Activated CD4-positive, alpha-beta memory T cell treated with anti-CD3 and anti-CD28 coated beads, Interleukin-2, amount 10 ng/mL, durations not matched to agents 7 days and 5 days (primary cell): ENCODE measurements at regions of chr10 and their contacts with region 1.

Region 1: GRCh38 chr10:95246579-95247051 is 44.2 kb downstream of the PDLIM1 start:
- DNase-seq: peak; percentile 68
- H3K4me3 Mint-ChIP-seq: no peak overlapping the region
- H3K27ac Mint-ChIP-seq: no peak overlapping the region
- H3K4me1 Mint-ChIP-seq: peaks cover 38% of the 10 kb centered on the region
- H3K27me3 Mint-ChIP-seq: peaks cover 4% of the 10 kb centered on the region

Region 2: GRCh38 chr10:95056744-95057363 is 189.8 kb before region 1 on chr10:
- CTCF ChIA-PET with region 1: no interaction called
- POLR2A ChIA-PET with region 1: no interaction called
- DNase-seq: no peak
- H3K4me3 Mint-ChIP-seq: no peak overlapping the region
- H3K27ac Mint-ChIP-seq: no peak overlapping the region
- H3K4me1 Mint-ChIP-seq: no peaks in the 10 kb centered on the region
- H3K27me3 Mint-ChIP-seq: no peaks in the 10 kb centered on the region

Region 3: DNA sequence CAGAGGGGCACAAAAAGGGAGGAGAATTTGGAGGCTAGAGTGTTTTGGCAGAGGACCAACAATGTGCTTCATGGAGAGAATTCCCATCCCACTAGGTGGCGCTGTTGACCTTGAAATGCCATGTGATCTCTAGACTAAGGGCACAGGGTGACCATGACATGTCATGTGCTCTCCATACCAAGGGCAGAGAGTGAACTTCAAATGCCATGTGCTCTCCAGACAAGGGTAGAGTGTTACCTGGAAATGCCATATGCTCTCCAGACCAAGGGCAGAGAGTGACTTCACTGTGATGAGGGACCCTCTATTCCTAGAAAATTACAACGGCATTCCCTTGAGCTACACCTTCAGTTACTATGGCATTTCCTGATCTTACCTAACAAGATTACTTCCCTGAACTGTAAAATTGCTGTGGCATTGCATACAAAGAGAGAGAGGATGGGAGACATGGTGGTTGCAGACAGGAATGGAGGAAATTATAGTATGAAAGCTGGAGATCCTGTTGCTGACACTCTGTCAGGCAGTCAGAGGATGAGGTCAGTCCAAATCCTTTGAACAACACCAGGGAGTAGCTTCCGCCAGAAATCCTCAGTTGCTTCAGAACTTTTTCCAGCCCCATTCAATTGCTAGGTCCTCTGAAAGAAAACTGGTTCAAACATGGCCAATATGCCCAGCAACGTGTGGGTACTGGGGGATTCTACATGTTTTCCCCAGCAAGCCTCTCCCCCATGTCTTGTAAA is 113.4 kb before region 1 on chr10:
- CTCF ChIA-PET with region 1: interaction called, 18 read pairs
- POLR2A ChIA-PET with region 1: no interaction called
- DNase-seq: peak; percentile 80
- H3K4me3 Mint-ChIP-seq: no peak overlapping the region
- H3K27ac Mint-ChIP-seq: no peak overlapping the region
- H3K4me1 Mint-ChIP-seq: no peaks in the 10 kb centered on the region
- H3K27me3 Mint-ChIP-seq: no peaks in the 10 kb centered on the region

Region 4: GRCh38 chr10:95183271-95184230 is 63.1 kb before region 1 on chr10:
- CTCF ChIA-PET with region 1: interaction called, 20 read pairs
- POLR2A ChIA-PET with region 1: no interaction called
- DNase-seq: peak; percentile 78
- H3K4me3 Mint-ChIP-seq: peak overlapping the region; percentile 50
- H3K27ac Mint-ChIP-seq: no peak overlapping the region
- H3K4me1 Mint-ChIP-seq: peaks cover 9% of the 10 kb centered on the region
- H3K27me3 Mint-ChIP-seq: peaks cover 51% of the 10 kb centered on the region

Region 5: GRCh38 chr10:95229724-95230627 is 16.6 kb before region 1 on chr10:
- CTCF ChIA-PET with region 1: interaction called, 54 read pairs
- POLR2A ChIA-PET with region 1: interaction called, 4 read pairs
- DNase-seq: no peak
- H3K4me3 Mint-ChIP-seq: peak overlapping the region; percentile 55
- H3K27ac Mint-ChIP-seq: no peak overlapping the region
- H3K4me1 Mint-ChIP-seq: peaks cover 13% of the 10 kb centered on the region
- H3K27me3 Mint-ChIP-seq: peaks cover 10% of the 10 kb centered on the region

Region 6: DNA sequence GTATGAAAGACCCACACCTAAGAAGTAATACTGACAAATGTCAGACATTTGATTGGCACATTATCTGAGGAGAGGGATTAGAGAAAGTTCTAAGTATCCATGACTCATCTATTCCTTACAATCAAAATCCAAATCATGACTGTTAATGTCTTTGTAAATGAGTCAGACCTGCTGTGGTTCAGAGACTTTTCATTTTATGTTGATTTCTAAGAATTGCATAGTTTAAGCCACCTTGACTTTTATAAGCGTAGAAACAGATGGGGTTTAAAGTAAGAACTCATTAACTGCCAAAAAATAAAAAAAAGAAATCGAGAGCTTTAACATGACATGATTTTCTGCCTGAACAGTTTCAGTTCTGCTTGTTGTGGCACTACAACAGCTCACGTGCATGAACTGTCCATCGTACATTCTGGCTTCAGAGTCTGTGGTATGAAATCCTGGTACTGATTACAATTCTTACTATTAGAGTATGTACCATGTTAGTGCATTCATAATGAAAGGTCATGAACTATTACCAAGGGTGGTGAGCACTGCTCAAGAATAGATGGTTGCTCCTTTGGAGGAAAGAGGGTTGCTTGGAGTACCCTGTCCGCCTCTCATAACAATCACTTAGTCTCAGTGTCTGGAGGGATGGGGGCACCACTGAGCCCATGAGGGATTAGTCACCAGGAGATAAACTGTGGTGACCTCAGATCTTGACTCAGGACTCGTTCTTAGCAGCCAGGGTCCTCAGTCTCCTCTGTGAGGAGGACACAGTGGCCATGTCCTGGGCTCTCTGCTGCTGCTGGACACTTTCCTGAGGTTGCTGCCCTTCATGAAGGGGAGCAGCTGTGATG is 10.3 kb before region 1 on chr10:
- CTCF ChIA-PET with region 1: interaction called, 54 read pairs
- POLR2A ChIA-PET with region 1: interaction called, 7 read pairs
- DNase-seq: no peak
- H3K4me3 Mint-ChIP-seq: peak overlapping the region; percentile 14
- H3K27ac Mint-ChIP-seq: peak overlapping the region; percentile 79
- H3K4me1 Mint-ChIP-seq: peaks cover 39% of the 10 kb centered on the region
- H3K27me3 Mint-ChIP-seq: peaks cover 5% of the 10 kb centered on the region

Region 7: GRCh38 chr10:95355301-95355700 is 108.7 kb after region 1 on chr10:
- CTCF ChIA-PET with region 1: interaction called, 220 read pairs
- POLR2A ChIA-PET with region 1: no interaction called
- DNase-seq: no peak
- H3K4me3 Mint-ChIP-seq: no peak overlapping the region
- H3K27ac Mint-ChIP-seq: no peak overlapping the region
- H3K4me1 Mint-ChIP-seq: no peaks in the 10 kb centered on the region
- H3K27me3 Mint-ChIP-seq: no peaks in the 10 kb centered on the region

Region 8: DNA sequence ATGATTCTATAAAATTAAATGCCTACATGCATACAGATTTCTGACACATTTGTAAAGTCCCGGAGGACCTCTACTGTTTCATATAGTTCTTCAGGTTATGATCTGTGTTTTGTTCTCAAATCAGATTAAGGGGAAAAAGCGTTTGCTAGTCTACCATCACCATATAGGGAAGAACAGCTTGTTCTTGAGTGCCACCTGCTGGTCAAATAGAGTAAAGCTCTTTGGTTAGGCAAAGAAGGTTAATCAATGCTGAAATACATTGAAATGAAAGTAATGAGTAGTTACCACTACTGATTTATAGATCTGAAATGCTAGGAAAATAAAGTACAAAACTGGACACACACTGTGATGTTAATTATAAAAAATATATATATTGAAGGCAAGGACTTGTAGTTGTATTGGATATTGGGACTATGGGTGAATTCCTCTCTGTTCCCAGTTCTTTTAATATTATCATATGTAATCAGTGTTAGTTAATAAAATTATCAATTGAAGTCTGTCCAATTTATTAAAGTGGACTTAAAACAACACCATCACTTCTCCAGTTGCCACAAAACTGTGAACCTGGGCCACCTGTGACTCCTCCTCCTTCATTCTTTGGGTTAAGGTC is 116.8 kb after region 1 on chr10:
- CTCF ChIA-PET with region 1: interaction called, 220 read pairs
- POLR2A ChIA-PET with region 1: no interaction called
- DNase-seq: peak; percentile 50
- H3K4me3 Mint-ChIP-seq: no peak overlapping the region
- H3K27ac Mint-ChIP-seq: no peak overlapping the region
- H3K4me1 Mint-ChIP-seq: no peaks in the 10 kb centered on the region
- H3K27me3 Mint-ChIP-seq: peaks cover 8% of the 10 kb centered on the region